Transverse colon (tissue), 4 donors: ENCODE measurements at regions of chr2 and their contacts with region 1.

Region 1: GRCh38 chr2:213251618-213252017 is 32.6 kb upstream of the SPAG16 start:
- DNase-seq: no peak
- H3K4me3 ChIP-seq: no peak overlapping the region
- H3K27ac ChIP-seq: no peak overlapping the region
- H3K4me1 ChIP-seq: peaks cover 0 to 3% (median 0%) of the 10 kb centered on the region in 4 donors
- H3K27me3 ChIP-seq: no peaks in the 10 kb centered on the region
- CTCF ChIP-seq: peak; percentile 59 to 72 (median 70)
- EP300 ChIP-seq: no peak
- POLR2A ChIP-seq: no peak

Region 2: GRCh38 chr2:213640738-213641425 is 389.3 kb after region 1 on chr2:
- in situ Hi-C with region 1: no loop called
- intact Hi-C with region 1: no loop called
- DNase-seq: no peak
- H3K4me3 ChIP-seq: no peak overlapping the region
- H3K27ac ChIP-seq: no peak overlapping the region
- H3K4me1 ChIP-seq: no peaks in the 10 kb centered on the region
- H3K27me3 ChIP-seq: no peaks in the 10 kb centered on the region
- CTCF ChIP-seq: no peak
- EP300 ChIP-seq: no peak
- POLR2A ChIP-seq: no peak

Region 3: DNA sequence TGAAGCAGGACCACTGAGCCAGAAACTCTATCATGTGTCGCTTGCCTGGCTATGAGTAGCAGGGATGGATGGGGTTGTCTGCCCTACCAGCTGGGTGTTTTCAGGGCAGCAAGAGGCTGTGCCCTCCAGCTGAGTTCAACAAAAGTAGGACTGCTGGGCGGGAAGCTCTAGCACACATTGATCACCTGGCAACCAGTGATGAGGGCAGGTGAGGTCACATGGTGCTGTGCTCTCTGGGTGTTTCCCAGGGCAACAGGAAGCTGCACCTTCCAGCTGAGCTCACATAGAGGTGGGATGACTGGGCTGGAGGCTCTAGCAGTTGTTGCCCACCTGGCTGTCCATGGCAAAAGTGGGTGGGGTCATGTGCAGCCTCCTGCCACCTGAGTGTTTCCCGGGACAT is 671.9 kb after region 1 on chr2:
- in situ Hi-C with region 1: loop called (anchors 5 to 25 kb)
- intact Hi-C with region 1: no loop called
- DNase-seq: no peak
- H3K4me3 ChIP-seq: no peak overlapping the region
- H3K27ac ChIP-seq: no peak overlapping the region
- H3K4me1 ChIP-seq: no peaks in the 10 kb centered on the region
- H3K27me3 ChIP-seq: no peaks in the 10 kb centered on the region
- CTCF ChIP-seq: no peak
- EP300 ChIP-seq: no peak
- POLR2A ChIP-seq: no peak

Region 4: DNA sequence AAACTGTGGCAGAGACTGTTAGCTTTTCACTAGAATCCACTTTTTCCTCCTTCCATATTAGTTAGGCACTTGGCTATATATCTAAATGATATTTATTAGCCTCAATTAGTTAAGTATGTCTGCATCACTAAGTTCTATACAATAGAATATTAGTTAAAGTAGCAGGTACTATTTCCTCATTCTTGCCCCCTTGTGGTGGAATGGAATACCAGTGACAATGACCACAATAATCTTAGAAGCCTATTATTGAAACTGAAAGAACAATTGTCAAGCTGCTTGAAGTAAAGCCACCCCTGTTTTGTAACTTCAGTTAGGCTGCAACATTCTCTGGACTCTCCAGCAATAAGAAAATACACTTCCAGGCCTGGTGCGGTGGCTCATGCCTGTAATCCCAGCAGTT is 682.9 kb after region 1 on chr2:
- in situ Hi-C with region 1: loop called in 3 of 4 experiments (anchors 5 to 25 kb)
- intact Hi-C with region 1: no loop called
- DNase-seq: no peak
- H3K4me3 ChIP-seq: no peak overlapping the region
- H3K27ac ChIP-seq: no peak overlapping the region
- H3K4me1 ChIP-seq: no peaks in the 10 kb centered on the region
- H3K27me3 ChIP-seq: no peaks in the 10 kb centered on the region
- CTCF ChIP-seq: peak in 3 of 5 experiments; percentile 20 to 45 (median 33)
- EP300 ChIP-seq: no peak
- POLR2A ChIP-seq: no peak

Region 5: DNA sequence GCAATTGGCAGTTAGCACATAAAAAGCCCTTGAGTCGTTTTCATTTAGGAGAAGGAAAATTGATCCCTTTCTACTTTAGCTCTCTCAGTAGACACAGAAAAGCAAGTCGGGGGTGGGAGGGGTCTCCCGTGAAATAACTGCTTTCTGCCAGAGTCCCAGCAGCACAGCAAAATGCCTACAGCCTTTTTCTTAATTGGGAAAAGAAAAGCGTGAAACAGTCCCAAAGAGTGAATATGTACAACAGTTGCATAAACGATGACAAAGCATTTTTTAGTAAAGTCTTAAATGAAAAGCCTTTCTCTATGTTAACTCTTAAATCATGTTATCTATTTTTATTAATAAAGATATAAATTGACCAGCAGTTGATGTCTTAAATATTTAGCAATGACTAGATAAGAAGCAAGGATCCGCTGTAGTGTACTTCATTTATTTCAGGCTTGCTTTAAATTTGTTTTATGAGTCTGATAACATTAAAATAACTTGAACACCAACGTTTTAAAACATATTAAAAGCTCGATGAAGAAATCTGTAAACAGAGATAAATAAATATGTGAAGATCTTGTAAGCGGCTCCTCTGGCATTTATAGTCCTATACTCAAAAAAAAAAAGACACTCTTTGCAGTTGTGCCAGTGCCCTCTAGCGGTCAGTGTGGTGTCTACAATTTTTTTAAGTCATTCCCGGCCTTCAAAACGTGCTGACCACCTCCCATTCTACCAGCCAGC is 2017.9 kb after region 1 on chr2:
- in situ Hi-C with region 1: loop called in 2 of 4 experiments (anchors 25 kb)
- intact Hi-C with region 1: no loop called
- DNase-seq: peak; percentile 65
- H3K4me3 ChIP-seq: no peak overlapping the region
- H3K27ac ChIP-seq: no peak overlapping the region
- H3K4me1 ChIP-seq: peaks cover 0 to 5% (median 4%) of the 10 kb centered on the region in 4 donors
- H3K27me3 ChIP-seq: no peaks in the 10 kb centered on the region
- CTCF ChIP-seq: peak; percentile 59 to 90 (median 80)
- EP300 ChIP-seq: no peak
- POLR2A ChIP-seq: no peak